PC-9 (cell line): ENCODE measurements at regions of chr5 and their contacts with region 1.

Region 1: DNA sequence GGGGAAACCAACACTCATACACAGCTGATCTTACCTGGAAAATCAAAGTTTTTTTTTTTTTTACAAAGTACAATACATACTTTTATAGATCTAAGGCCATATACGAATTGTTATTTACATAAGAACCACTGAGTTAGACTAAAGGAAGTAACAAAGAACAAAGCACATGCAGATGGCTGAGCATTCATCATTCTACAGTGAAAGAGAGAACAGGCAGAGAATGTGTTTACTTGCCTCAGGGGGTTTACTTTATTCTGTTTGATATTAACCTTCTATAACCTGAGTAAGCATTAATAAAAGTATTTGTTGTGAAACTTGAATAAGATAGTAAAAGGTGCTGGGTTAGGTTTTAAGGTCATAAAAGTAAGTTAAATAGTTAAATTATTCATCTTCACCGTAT is 54.7 kb downstream of the SLC38A9 start:
- DNase-seq: no peak
- H3K4me3 ChIP-seq: no peak overlapping the region
- H3K27ac ChIP-seq: no peak overlapping the region
- H3K4me1 ChIP-seq: no peaks in the 10 kb centered on the region
- H3K27me3 ChIP-seq: no peaks in the 10 kb centered on the region
- CTCF ChIP-seq: no peak

Region 2: DNA sequence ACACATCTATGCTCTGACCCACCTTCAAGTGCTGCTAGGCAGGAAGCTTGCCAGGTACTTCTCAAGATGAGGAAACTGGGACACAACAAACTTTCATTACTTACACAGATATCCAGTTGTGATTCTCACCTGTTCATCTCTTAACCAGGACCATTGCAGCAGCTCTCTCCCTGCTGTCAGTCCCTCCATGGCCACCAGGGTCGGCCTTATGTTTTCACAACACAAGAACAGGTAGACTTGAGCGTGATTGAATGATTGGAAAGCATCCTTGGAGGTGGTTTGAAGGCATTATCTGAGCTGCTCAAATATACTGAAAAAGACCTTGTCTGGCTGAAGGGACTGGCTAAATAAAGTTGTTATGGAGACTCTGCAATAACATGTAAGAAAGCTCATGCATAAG is 255.2 kb before region 1 on chr5:
- CTCF ChIA-PET with region 1: no interaction called
- POLR2A ChIA-PET with region 1: no interaction called
- intact Hi-C with region 1: no loop called
- DNase-seq: no peak
- H3K4me3 ChIP-seq: no peak overlapping the region
- H3K27ac ChIP-seq: no peak overlapping the region
- H3K4me1 ChIP-seq: 0 out of 2 replicates have a peak, but pooled peaks cover 6% of the 10 kb centered on the region
- H3K27me3 ChIP-seq: no peaks in the 10 kb centered on the region
- CTCF ChIP-seq: peak; percentile 33; the same call in 1 of the 2 replicates

Region 3: DNA sequence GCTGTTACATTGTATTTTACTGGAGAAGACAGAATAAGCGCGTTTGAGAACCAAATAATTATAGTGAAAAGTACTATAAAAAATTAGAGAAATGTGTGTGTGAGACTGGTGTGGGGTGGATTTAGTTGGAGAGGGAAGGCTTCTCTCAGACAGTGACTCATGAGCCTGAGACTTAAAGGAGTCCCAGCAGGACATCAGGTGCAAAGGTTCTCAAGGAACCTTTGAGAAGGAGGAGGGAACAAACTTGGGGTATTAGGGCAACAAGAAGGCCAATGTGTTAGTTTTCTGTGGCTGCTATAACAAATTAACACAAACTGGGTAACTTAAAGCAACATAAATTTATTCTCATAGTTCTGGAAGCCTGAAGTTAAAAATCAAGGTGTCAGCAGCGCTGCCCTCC is 85.3 kb after region 1 on chr5:
- CTCF ChIA-PET with region 1: no interaction called
- POLR2A ChIA-PET with region 1: interaction called, 14 read pairs
- intact Hi-C with region 1: no loop called
- DNase-seq: no peak
- H3K4me3 ChIP-seq: no peak overlapping the region
- H3K27ac ChIP-seq: no peak overlapping the region
- H3K4me1 ChIP-seq: no peaks in the 10 kb centered on the region
- H3K27me3 ChIP-seq: no peaks in the 10 kb centered on the region
- CTCF ChIP-seq: no peak